Common myeloid progenitor, CD34-positive (primary cell): ENCODE measurements at regions of chr20 and their contacts with region 1.

Region 1: DNA sequence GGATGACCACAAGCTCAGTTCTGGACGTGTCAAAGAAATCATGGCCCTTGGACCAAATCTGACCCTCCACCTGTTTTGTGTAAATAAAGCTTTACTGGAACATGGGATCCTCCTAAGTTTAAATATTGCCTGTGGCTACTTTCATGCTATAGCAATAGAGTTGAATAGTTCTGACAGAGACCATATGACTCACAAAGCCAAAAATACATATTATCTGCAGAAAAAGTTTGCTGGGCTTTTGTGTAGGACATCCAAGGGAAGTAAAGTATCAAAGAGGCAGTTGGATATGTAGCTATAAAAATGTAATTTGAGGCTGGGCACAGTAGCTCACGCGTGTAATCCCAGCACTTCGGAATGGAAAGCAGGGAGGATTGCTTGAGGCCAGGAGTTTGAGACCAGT is 78.9 kb downstream of the TOX2 start:
- DNase-seq: no peak
- H3K4me3 ChIP-seq: no peak overlapping the region
- H3K27ac ChIP-seq: no peak overlapping the region
- H3K4me1 ChIP-seq: no peaks in the 10 kb centered on the region
- H3K27me3 ChIP-seq: peaks cover 0 to 3% (median 1%) of the 10 kb centered on the region in 5 experiments

Region 2: DNA sequence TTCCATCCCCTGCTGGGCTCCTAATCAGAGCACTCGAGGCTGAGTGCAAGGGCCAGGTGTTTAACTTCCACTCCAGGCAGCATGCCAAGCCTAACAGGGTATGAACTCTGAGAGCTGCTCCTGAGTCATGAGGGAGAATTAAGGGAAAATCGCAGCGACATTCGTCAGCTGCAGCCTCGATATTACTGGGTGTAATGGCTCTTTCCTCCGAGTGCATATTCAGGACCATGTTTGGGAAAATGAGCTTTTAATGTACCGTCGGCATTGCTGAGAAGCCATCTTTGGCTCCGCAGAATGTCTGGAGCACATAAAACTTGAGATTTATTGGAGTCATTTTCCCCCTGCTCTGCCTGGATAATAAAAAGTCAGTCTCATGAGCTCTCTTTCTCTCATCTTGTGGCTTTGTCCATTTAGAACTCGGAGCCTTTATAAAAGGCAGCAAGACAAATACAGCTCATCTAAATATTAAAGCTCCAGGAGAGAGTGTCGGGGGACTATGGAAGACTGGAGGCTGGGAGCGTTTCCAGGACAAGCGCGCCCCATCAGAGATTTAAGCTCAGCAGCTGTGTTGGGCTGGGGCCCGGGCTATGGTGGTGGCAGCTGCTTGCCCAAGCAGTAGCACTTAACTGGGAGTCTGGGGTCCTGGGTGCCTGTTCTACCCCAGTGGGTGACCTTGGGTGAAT is 24.8 kb after region 1 on chr20:
- CTCF ChIA-PET with region 1: no interaction called
- POLR2A ChIA-PET with region 1: no interaction called
- DNase-seq: no peak
- H3K4me3 ChIP-seq: no peak overlapping the region
- H3K27ac ChIP-seq: no peak overlapping the region
- H3K4me1 ChIP-seq: peaks cover 0 to 8% (median 3%) of the 10 kb centered on the region in 4 experiments
- H3K27me3 ChIP-seq: peaks cover 0 to 81% (median 11%) of the 10 kb centered on the region in 5 experiments

Region 3: GRCh38 chr20:44231713-44232468 is 238.3 kb after region 1 on chr20:
- CTCF ChIA-PET with region 1: no interaction called
- POLR2A ChIA-PET with region 1: no interaction called
- DNase-seq: no peak
- H3K4me3 ChIP-seq: no peak overlapping the region
- H3K27ac ChIP-seq: no peak overlapping the region
- H3K4me1 ChIP-seq: no peaks in the 10 kb centered on the region
- H3K27me3 ChIP-seq: no peaks in the 10 kb centered on the region

Region 4: GRCh38 chr20:44725837-44726236 is 732.3 kb after region 1 on chr20:
- CTCF ChIA-PET with region 1: no interaction called
- POLR2A ChIA-PET with region 1: interaction called, 15 read pairs
- DNase-seq: no peak
- H3K4me3 ChIP-seq: no peak overlapping the region
- H3K27ac ChIP-seq: no peak overlapping the region
- H3K4me1 ChIP-seq: peaks cover 0 to 19% (median 9%) of the 10 kb centered on the region in 4 experiments
- H3K27me3 ChIP-seq: no peaks in the 10 kb centered on the region